Activated CD4-positive, alpha-beta T cell treated with anti-CD3 and anti-CD28 coated beads for 36 hours (primary cell): ENCODE measurements at regions of chr10 and their contacts with region 1.

Region 1: GRCh38 chr10:98404571-98405359 is 10.2 kb downstream of the PYROXD2 start:
- DNase-seq: peak; percentile 51
- ATAC-seq: peak; percentile 72
- H3K4me3 Mint-ChIP-seq: no peak overlapping the region
- H3K27ac Mint-ChIP-seq: peak overlapping the region; percentile 72
- H3K4me1 Mint-ChIP-seq: peaks cover 17% of the 10 kb centered on the region
- H3K27me3 Mint-ChIP-seq: no peaks in the 10 kb centered on the region

Region 2: GRCh38 chr10:98295907-98296306 is 108.9 kb before region 1 on chr10:
- CTCF ChIA-PET with region 1: no interaction called
- POLR2A ChIA-PET with region 1: no interaction called
- intact Hi-C with region 1: no loop called
- DNase-seq: no peak
- ATAC-seq: no peak
- H3K4me3 Mint-ChIP-seq: no peak overlapping the region
- H3K27ac Mint-ChIP-seq: no peak overlapping the region
- H3K4me1 Mint-ChIP-seq: no peaks in the 10 kb centered on the region
- H3K27me3 Mint-ChIP-seq: peaks cover 15% of the 10 kb centered on the region

Region 3: DNA sequence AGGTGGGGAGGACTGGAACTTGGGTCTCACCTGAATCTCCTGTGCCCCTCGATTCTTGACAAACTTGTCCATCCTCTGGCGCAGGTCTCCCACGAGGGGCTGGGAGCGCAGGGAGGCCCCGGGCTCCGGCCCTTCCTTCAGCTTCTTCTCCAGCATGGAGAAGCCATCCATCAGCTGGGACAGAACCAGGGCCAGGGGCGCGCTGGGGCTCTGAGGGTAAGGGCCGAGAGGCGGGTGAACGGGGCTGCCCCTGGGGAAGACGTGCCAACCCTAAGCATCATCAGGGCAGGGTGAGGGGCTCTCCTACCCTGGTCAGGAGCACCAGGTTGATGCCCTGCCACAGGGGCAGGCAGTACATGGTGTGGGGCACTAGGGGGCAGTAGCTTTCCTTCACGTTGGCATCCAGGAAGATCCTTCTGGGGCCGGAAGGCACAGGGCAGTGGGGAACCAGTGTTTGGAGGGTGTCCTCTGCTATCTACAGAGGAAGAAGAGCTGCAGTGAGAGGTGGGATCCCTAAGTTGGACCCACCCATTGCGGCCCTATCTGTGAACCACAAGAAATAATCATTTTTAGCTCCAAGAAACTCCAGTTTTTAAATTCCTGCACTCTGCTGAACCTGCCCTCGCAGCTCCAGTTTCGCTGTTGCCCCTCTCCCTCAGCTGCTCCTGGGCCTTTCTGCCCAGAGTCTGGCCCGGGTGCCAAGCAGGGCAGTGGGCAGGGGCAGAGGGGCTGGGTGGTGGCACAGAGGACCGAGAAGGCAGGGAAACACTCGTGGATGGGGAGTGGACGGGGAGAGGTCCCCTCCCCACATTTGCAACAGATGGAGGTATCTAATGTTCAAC is 21.0 kb after region 1 on chr10:
- CTCF ChIA-PET with region 1: interaction called, 10 read pairs
- POLR2A ChIA-PET with region 1: no interaction called
- intact Hi-C with region 1: no loop called
- DNase-seq: peak; percentile 73
- ATAC-seq: peak; percentile 87
- H3K4me3 Mint-ChIP-seq: no peak overlapping the region
- H3K27ac Mint-ChIP-seq: no peak overlapping the region
- H3K4me1 Mint-ChIP-seq: no peaks in the 10 kb centered on the region
- H3K27me3 Mint-ChIP-seq: no peaks in the 10 kb centered on the region

Region 4: GRCh38 chr10:98446661-98447221 is 42.0 kb after region 1 on chr10 and contains the start of gene HPS1:
- CTCF ChIA-PET with region 1: interaction called, 4 read pairs
- POLR2A ChIA-PET with region 1: no interaction called
- intact Hi-C with region 1: loop called in 1 of 2 experiments (anchors 2 kb)
- DNase-seq: peak; percentile 92
- ATAC-seq: peak; percentile 93
- H3K4me3 Mint-ChIP-seq: peak within 1 kb of the TSS; percentile 93
- H3K27ac Mint-ChIP-seq: peak within 1 kb of the TSS; percentile 88
- H3K4me1 Mint-ChIP-seq: peaks cover 39% of the 10 kb centered on the region
- H3K27me3 Mint-ChIP-seq: peaks cover 5% of the 10 kb centered on the region
- total RNA-seq, gene HPS1: 51.9 to 53.2 TPM

Region 5: GRCh38 chr10:98694014-98694413 is 289.2 kb after region 1 on chr10:
- CTCF ChIA-PET with region 1: no interaction called
- POLR2A ChIA-PET with region 1: no interaction called
- intact Hi-C with region 1: no loop called
- DNase-seq: no peak
- ATAC-seq: no peak
- H3K4me3 Mint-ChIP-seq: no peak overlapping the region
- H3K27ac Mint-ChIP-seq: no peak overlapping the region
- H3K4me1 Mint-ChIP-seq: no peaks in the 10 kb centered on the region
- H3K27me3 Mint-ChIP-seq: peaks cover 14% of the 10 kb centered on the region

Region 6: GRCh38 chr10:99412099-99412498 is 1007.3 kb after region 1 on chr10:
- CTCF ChIA-PET with region 1: no interaction called
- POLR2A ChIA-PET with region 1: no interaction called
- intact Hi-C with region 1: no loop called
- DNase-seq: no peak
- ATAC-seq: no peak
- H3K4me3 Mint-ChIP-seq: no peak overlapping the region
- H3K27ac Mint-ChIP-seq: no peak overlapping the region
- H3K4me1 Mint-ChIP-seq: peaks cover 5% of the 10 kb centered on the region
- H3K27me3 Mint-ChIP-seq: no peaks in the 10 kb centered on the region